ENCODE measurements at regions of chr13 and their contacts with region 1.

Region 1: GRCh38 chr13:76903544-76904162 is 17.4 kb upstream of the KCTD12 start:
- DNase-seq: peak in 2 of 3 donors; percentile 63 to 81
- ATAC-seq: peak; percentile 93
- H3K4me3 ChIP-seq: no peak overlapping the region
- H3K4me1 ChIP-seq: no peaks in the 10 kb centered on the region
- CTCF ChIP-seq: peak; percentile 90

Region 2: GRCh38 chr13:75876360-75877050 is 1027.1 kb before region 1 on chr13:
- intact Hi-C with region 1: loop called in 1 of 2 experiments (anchors 5 kb)
- DNase-seq: peak in 2 of 3 donors; percentile 43 to 68
- ATAC-seq: peak; percentile 79
- H3K4me3 ChIP-seq: no peak overlapping the region
- H3K4me1 ChIP-seq: peaks cover 2% of the 10 kb centered on the region
- CTCF ChIP-seq: peak; percentile 78

Region 3: GRCh38 chr13:76266561-76266960 is 637.1 kb before region 1 on chr13:
- intact Hi-C with region 1: no loop called
- DNase-seq: no peak
- ATAC-seq: no peak
- H3K4me3 ChIP-seq: no peak overlapping the region
- H3K4me1 ChIP-seq: no peaks in the 10 kb centered on the region
- CTCF ChIP-seq: no peak

Region 4: DNA sequence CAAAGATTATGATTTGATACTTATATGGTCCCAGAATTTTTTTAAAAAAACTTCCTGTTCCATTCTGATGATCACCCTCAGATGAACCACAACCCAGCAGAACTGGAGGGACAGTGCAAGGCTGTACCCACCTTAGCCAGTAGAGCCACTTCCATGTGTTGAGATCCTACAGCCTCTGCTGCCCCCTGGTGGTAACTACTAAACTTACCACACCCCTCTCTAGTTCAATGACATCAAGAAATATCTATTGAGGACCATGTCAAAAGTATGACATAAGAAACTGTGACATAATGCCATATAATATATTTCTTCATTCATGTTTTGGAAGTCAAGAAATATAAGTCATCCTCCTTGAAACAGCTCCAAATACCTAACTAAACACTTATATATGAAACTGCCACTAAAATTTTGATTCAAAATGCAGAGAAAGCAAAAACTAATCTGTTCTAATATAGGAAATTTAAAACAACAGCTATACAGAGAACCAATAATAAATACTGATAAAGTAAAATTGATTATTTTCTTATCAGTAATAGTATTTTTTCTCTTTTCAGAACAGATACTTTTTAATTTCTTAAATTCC is 430.0 kb before region 1 on chr13:
- intact Hi-C with region 1: loop called (anchors 10 kb)
- DNase-seq: peak in 2 of 3 donors; percentile 33 to 78
- ATAC-seq: peak; percentile 87
- H3K4me3 ChIP-seq: no peak overlapping the region
- H3K4me1 ChIP-seq: no peaks in the 10 kb centered on the region
- CTCF ChIP-seq: peak; percentile 55

Region 5: GRCh38 chr13:76667551-76667950 is 236.1 kb before region 1 on chr13:
- intact Hi-C with region 1: loop called in 1 of 2 experiments (anchors 10 kb)
- DNase-seq: peak in 1 of 3 donors; percentile 31
- ATAC-seq: peak; percentile 40
- H3K4me3 ChIP-seq: no peak overlapping the region
- H3K4me1 ChIP-seq: no peaks in the 10 kb centered on the region
- CTCF ChIP-seq: no peak

Region 6: DNA sequence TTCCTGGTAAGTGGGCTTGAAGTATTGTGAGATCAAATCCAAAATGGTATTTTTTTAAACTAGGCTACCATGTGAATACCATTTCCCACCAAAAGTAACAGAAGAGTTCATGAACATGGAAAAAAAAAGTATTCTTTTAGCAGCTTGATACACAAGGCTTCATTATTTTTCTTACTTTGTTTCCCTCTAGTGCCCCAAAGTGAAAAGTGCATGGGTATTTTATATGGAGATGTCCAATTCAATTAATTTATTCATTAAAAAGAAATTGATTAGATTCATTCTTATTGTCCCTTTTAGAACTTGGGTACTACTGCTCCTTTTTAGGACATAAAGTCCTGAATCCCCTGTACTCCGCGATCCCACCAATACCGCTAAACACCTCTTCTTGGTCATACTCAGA is 603.2 kb after region 1 on chr13:
- intact Hi-C with region 1: no loop called
- DNase-seq: no peak
- ATAC-seq: no peak
- H3K4me3 ChIP-seq: no peak overlapping the region
- H3K4me1 ChIP-seq: no peaks in the 10 kb centered on the region
- CTCF ChIP-seq: no peak